KBM-7 (cell line): ENCODE measurements at regions of chr1 and their contacts with region 1.

Region 1: DNA sequence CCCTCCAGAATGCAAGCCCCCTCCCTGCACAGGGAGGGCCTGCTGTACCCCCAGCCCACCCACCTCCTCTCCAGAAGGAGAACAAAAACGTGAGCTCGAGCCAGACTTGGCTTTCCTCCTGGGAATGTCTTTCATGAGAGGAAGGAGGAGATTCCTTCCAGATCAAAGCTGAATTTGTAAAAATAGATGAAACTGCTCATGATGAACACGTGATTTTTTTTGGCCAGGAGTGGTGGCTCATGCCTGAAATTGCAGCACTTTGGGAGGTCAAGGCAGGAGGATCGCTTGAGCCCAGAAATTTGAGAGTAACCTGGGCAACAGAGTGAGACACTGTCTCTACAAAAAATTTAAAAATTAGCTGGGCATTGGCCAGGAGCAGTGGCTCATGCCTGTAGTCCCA is 21.8 kb downstream of the GPR157 start:
- DNase-seq: no peak

Region 2: DNA sequence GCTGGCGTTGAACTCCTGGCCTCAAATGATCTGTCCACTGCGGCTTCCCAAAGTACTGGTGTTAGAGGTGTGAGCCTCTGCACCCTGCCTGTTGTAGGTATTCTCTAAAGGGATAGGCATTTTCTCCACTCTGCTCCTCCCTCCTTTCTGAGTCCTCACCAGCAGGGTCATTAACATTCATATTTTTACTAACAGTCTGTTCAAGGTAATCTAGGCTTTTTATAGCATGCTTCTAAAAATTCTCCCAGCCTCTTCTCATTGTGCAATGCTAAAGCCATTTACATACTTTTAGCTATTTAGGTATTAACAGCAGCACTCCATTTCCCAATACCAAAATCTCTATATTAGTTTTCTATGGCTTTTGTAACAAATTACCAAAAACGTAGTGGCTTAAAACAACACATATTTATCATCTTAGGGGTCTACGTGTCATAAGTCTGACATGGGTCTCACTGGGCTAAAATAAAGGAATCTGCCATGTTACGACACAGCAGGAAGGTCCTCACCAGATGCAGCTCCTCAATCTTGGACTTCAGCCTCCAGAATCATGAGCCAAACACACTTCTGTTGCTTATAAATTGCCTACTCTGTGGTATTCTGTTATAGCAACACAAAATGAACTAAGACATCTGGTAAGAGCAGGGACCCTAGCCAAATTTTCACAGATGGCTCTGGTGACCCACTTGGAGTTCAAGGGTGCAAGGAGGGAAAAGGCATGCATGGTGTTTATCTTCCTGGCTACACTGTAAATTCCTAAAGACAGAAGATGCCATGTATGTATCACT is 78.0 kb before region 1 on chr1:
- in situ Hi-C with region 1: loop called (anchors 5 kb)
- DNase-seq: no peak